ENCODE measurements at regions of chr2 and their contacts with region 1.

Region 1: DNA sequence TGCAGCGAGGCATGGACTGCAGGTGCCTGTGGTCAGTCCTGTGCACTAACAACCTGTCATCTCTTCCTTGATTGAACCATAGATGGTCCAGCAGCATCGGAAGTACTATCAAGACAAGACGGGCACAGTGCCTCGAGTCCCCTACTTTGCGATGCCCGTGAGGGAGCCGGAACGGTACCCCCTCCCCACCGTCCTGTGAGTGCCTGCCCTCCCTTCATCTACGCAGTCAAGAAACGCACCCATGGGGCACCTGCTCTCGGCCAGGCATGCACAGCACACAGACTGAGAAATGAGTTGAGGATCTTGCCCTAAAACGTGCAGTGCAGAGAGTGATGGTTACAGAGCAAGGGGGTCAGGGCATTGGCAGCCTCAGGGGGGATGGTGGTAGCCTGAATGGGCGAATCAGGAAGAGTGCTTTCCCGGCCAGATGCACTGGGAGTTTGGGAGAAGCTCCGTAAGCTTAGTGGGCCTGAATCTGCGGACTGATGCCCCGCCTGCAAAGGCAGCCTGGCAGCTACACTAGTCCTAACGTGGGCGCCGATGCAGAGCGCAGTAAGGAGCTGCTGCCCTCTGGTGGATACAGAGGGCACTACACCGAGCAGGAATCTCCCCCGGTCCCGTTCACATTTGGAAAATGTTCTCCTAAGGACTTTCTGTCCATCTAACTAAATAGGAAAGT is 63.6 kb downstream of the CIB4 start:
- DNase-seq: peak; percentile 76
- ATAC-seq: peak; percentile 90
- H3K4me3 Mint-ChIP-seq: no peak overlapping the region
- H3K27ac Mint-ChIP-seq: no peak overlapping the region
- H3K4me1 Mint-ChIP-seq: no peaks in the 10 kb centered on the region
- H3K27me3 Mint-ChIP-seq: peaks cover 2% of the 10 kb centered on the region

Region 2: DNA sequence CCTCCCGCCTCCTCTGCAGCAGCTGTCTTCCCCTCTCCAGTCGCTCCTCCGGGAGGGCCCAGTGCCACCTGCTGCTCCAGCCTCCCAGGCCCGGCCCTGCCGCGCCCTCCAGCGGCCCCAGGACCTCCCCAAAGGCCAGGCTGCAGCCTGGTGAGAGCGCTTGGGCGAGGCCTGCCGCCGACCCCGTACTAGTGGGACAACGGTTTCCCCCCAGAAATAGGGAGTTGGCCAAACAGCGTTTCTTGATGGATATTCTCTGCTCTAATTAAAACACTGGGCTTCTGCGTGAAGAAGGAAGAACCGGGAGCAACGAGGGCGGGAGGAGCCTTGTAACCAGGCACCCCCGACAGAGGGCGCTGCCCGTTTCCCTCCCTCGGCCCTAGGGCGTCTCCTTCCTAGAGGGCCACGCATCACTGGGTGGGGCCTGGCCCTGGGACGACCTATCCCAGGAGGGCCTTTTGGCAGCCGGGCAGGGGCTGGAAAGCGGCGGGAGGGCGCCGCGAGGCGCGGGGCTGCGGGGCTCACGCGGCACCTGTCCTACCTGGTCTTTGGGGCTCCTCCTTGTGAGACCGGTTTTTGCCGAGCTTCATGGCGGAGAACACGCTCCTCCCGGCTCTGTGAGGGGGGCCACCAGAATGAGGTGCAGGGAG is 74.2 kb before region 1 on chr2:
- CTCF ChIA-PET with region 1: interaction called, 39 read pairs
- POLR2A ChIA-PET with region 1: no interaction called
- DNase-seq: peak; percentile 90
- ATAC-seq: peak; percentile 100
- H3K4me3 Mint-ChIP-seq: peak overlapping the region; percentile 67
- H3K27ac Mint-ChIP-seq: peak overlapping the region; percentile 72
- H3K4me1 Mint-ChIP-seq: peaks cover 9% of the 10 kb centered on the region
- H3K27me3 Mint-ChIP-seq: peaks cover 9% of the 10 kb centered on the region

Region 3: DNA sequence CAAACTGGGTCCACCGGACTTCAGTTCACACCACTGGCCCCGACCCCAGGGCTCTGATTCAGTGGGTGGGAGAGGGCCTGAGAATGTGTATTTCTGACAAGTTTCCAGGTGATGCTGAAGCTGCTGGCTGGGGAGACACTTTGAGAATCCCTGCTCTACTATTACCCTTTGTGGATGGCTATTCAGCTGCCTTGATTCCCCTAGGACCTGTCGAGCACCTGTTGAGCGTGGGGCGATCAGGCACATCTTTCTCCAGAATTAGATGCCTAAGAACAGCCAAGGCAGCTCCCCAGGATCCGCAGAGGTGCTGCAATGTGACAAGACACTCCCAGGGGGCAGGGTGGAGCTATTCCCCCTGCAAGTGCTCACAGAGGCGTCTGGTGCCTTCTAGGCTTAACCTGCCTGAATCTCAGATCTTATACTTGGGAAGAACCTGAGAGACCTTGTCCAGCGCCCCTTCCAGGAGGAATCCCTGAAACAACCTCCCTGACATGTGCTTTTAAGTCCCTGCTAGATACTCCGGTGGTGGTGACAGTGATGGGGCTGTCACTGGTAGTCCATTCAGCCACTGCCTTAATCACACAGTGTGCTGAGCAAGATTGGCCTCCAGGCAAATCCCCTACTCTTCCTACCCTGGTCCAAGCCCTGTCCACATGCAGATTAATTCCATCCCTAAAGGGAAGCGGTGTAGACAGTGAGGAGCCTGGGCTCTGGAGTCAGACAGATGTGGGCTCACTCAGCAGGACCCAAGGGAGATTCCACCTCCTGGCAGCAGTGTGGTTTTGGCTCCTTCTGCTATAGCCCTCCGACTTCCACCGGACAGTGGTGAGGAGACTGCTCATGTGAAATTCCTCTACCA is 56.3 kb before region 1 on chr2:
- CTCF ChIA-PET with region 1: interaction called, 21 read pairs
- POLR2A ChIA-PET with region 1: no interaction called
- DNase-seq: peak; percentile 29
- ATAC-seq: no peak
- H3K4me3 Mint-ChIP-seq: no peak overlapping the region
- H3K27ac Mint-ChIP-seq: no peak overlapping the region
- H3K4me1 Mint-ChIP-seq: peaks cover 16% of the 10 kb centered on the region
- H3K27me3 Mint-ChIP-seq: peaks cover 9% of the 10 kb centered on the region

Region 4: GRCh38 chr2:26558341-26559043 is 19.1 kb before region 1 on chr2:
- CTCF ChIA-PET with region 1: interaction called, 12 read pairs
- POLR2A ChIA-PET with region 1: no interaction called
- DNase-seq: no peak
- ATAC-seq: no peak
- H3K4me3 Mint-ChIP-seq: no peak overlapping the region
- H3K27ac Mint-ChIP-seq: no peak overlapping the region
- H3K4me1 Mint-ChIP-seq: peaks cover 9% of the 10 kb centered on the region
- H3K27me3 Mint-ChIP-seq: peaks cover 44% of the 10 kb centered on the region

Region 5: GRCh38 chr2:26598336-26598995 is 20.9 kb after region 1 on chr2:
- CTCF ChIA-PET with region 1: interaction called, 11 read pairs
- POLR2A ChIA-PET with region 1: no interaction called
- DNase-seq: no peak
- ATAC-seq: no peak
- H3K4me3 Mint-ChIP-seq: no peak overlapping the region
- H3K27ac Mint-ChIP-seq: no peak overlapping the region
- H3K4me1 Mint-ChIP-seq: peaks cover 6% of the 10 kb centered on the region
- H3K27me3 Mint-ChIP-seq: peaks cover 28% of the 10 kb centered on the region

Region 6: GRCh38 chr2:26630669-26631360 is 53.2 kb after region 1 on chr2:
- CTCF ChIA-PET with region 1: no interaction called
- POLR2A ChIA-PET with region 1: no interaction called
- DNase-seq: no peak
- ATAC-seq: no peak
- H3K4me3 Mint-ChIP-seq: no peak overlapping the region
- H3K27ac Mint-ChIP-seq: no peak overlapping the region
- H3K4me1 Mint-ChIP-seq: no peaks in the 10 kb centered on the region
- H3K27me3 Mint-ChIP-seq: no peaks in the 10 kb centered on the region

Measured in activated CD8-positive, alpha-beta T cell treated with anti-CD3 and anti-CD28 coated beads, Interleukin-2, amount 10 ng/mL, durations not matched to agents 7 days and 5 days (primary cell).